ENCODE measurements at regions of chr1 and their contacts with region 1.

Region 1: GRCh38 chr1:180229152-180229973 is 701 bp upstream of the LHX4 start:
- DNase-seq: peak in 1 of 9 donors; percentile 36
- ATAC-seq: peak; percentile 51
- H3K4me3 ChIP-seq: peak overlapping the region; percentile 27
- H3K4me3 Mint-ChIP-seq: peak overlapping the region; percentile 50 to 81 (median 70)
- H3K27ac ChIP-seq: no peak overlapping the region
- H3K27ac Mint-ChIP-seq: no peak overlapping the region
- H3K4me1 ChIP-seq: peaks cover 15 to 17% of the 10 kb centered on the region in 2 donors
- H3K4me1 Mint-ChIP-seq: peaks cover 14 to 35% (median 21%) of the 10 kb centered on the region in 7 donors
- H3K27me3 ChIP-seq: peaks cover 15 to 36% of the 10 kb centered on the region in 2 donors
- H3K27me3 Mint-ChIP-seq: peaks cover 62 to 85% (median 70%) of the 10 kb centered on the region in 5 donors

Region 2: GRCh38 chr1:179883745-179884138 is 345.6 kb before region 1 on chr1:
- CTCF ChIA-PET with region 1: no interaction called
- POLR2A ChIA-PET with region 1: no interaction called
- intact Hi-C with region 1: no loop called
- DNase-seq: peak in 8 of 9 donors; percentile 40 to 90 (median 58)
- ATAC-seq: peak; percentile 31
- H3K4me3 ChIP-seq: peak overlapping the region; percentile 96
- H3K4me3 Mint-ChIP-seq: peak overlapping the region; percentile 93 to 99 (median 97)
- H3K27ac ChIP-seq: peak overlapping the region; percentile 98
- H3K27ac Mint-ChIP-seq: peak overlapping the region; percentile 99 to 100 (median 100)
- H3K4me1 ChIP-seq: peaks cover 27 to 33% of the 10 kb centered on the region in 2 donors
- H3K4me1 Mint-ChIP-seq: peaks cover 36 to 76% (median 61%) of the 10 kb centered on the region in 7 donors
- H3K27me3 ChIP-seq: no peaks in the 10 kb centered on the region
- H3K27me3 Mint-ChIP-seq: no peaks in the 10 kb centered on the region

Region 3: DNA sequence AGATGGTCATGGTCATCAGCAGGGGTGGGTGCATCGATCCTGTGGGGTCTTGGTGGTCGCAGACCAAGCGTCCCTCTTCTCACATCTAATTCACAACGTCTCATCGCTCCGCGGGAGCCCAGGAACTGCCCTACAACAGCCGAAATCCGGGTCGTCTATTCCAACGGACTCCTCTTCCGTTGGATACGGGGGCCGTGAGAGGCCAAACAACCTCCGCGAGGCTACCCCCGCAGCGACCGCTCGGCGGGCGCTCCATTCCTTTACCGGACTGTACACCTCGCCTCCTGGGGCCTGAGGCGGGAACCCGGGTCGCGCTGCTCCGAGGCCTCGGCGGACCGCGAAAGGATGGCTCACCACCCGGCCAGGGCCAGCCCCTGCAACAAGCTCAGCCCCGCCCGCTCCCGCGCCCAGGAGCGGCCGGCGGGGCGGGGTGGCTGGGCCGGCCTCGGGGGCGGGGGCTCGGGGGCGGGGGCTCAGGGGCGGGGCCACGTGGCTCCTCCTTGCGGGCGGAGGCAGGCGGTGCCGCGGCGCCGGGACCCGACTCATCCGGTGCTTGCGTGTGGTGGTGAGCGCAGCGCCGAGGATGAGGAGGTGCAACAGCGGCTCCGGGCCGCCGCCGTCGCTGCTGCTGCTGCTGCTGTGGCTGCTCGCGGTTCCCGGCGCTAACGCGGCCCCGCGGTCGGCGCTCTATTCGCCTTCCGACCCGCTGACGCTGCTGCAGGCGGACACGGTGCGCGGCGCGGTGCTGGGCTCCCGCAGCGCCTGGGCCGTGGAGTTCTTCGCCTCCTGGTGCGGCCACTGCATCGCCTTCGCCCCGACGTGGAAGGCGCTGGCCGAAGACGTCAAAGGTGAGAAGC is 74.8 kb before region 1 on chr1 and contains the start of gene QSOX1:
- CTCF ChIA-PET with region 1: no interaction called
- POLR2A ChIA-PET with region 1: no interaction called
- intact Hi-C with region 1: loop called in 1 of 2 experiments (anchors 5 kb)
- DNase-seq: peak; percentile 81 to 89 (median 86)
- ATAC-seq: peak; percentile 97
- H3K4me3 ChIP-seq: peak within 1 kb of the TSS; percentile 94
- H3K4me3 Mint-ChIP-seq: peak within 1 kb of the TSS; percentile 80 to 99 (median 91)
- H3K27ac ChIP-seq: peak within 1 kb of the TSS; percentile 78
- H3K27ac Mint-ChIP-seq: peak within 1 kb of the TSS; percentile 81 to 95 (median 86)
- H3K4me1 ChIP-seq: peaks cover 7 to 20% of the 10 kb centered on the region in 2 donors
- H3K4me1 Mint-ChIP-seq: peaks cover 24 to 45% (median 37%) of the 10 kb centered on the region in 7 donors
- H3K27me3 ChIP-seq: no peaks in the 10 kb centered on the region
- H3K27me3 Mint-ChIP-seq: no peaks in the 10 kb centered on the region
- total RNA-seq, gene QSOX1: 22.1 to 55.6 (median 25.6) TPM

Region 4: DNA sequence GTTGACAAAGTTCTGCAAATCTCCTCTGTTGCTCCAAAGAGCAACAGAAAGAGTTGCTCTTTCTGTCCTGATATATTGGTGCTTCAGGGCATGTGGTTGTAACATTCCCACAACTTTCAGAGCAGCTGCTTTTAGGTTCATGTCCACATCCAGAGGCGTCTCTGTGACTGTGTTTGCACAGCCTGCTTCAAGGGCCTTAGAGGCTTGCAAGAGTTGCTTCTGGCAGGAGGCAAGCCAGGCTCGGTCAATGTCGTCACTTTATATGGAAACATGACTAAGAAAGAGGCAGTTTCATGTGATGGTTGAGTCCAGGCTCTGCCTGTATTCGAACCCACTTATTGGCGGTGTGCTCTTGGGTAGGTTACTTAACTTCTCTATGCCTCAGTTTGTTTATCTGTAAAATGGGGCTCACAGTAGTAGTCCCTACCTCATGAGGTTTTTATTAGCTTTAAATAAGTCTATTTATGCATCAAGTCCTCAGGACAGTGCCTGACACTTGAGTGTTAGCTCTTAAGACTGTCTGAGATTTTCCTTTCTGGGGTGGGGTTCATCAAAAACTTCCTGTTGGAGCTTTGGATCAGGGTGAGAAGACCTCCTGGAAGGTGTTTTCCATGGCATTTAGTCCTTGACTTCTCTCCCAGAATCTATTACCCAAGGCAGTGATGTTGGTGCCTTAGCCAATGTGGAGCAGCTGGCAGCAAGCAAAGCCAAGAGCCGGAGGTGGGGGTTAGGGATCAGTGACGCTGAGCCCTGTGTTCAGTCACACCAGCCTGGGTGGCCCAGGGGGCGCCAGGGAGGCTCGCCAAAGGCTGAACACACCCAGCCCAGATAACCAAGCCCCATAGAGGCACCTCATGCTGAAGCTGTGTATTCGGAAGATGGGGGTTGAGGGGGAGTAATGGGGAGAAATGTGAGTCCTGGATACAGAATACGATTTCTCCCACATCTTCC is 19.6 kb after region 1 on chr1:
- CTCF ChIA-PET with region 1: no interaction called
- POLR2A ChIA-PET with region 1: no interaction called
- intact Hi-C with region 1: no loop called
- DNase-seq: no peak
- ATAC-seq: no peak
- H3K4me3 ChIP-seq: no peak overlapping the region
- H3K4me3 Mint-ChIP-seq: no peak overlapping the region
- H3K27ac ChIP-seq: no peak overlapping the region
- H3K27ac Mint-ChIP-seq: no peak overlapping the region
- H3K4me1 ChIP-seq: no peaks in the 10 kb centered on the region
- H3K4me1 Mint-ChIP-seq: peaks cover 0 to 4% (median 0%) of the 10 kb centered on the region in 7 donors
- H3K27me3 ChIP-seq: peaks cover 0 to 6% of the 10 kb centered on the region in 2 donors
- H3K27me3 Mint-ChIP-seq: peaks cover 6 to 64% (median 45%) of the 10 kb centered on the region in 5 donors

Region 5: DNA sequence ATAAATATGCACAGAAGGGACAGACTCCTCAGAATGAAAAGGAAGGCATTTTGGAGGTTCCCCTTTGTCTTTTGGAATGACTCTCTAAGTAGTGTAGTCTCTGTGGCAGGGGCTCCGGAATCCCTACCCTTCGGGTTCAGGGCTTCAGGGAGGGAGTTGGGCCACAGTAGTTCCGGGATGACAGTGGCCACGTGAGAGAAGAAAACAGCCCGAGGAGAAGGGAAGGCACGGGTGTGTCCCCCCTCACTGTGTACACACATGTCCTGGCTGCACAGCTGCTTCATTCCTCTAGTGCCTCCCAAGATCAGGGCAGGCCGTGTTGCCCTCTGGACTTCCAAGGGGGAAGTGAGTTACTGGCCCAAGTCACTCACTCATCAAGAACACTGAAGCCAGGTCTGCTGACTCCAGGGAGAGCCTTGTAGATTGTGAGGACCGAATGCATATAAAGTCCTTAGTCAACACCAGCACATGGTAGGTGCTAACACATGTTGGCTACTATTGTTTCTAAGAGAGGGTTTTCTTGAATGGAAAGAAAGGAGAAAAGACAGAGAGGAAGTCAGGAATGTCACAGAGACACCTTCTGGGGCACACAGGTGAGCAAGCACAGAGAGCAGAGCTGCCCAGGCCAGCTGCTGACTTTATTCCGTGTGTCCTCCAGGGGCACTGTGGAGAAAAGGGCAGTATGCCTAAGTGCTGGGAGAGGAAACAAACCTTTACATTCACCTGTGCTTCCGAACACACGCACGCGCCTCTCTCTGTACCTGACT is 40.6 kb after region 1 on chr1:
- CTCF ChIA-PET with region 1: no interaction called
- POLR2A ChIA-PET with region 1: no interaction called
- intact Hi-C with region 1: no loop called
- DNase-seq: no peak
- ATAC-seq: peak; percentile 13
- H3K4me3 ChIP-seq: no peak overlapping the region
- H3K4me3 Mint-ChIP-seq: no peak overlapping the region
- H3K27ac ChIP-seq: no peak overlapping the region
- H3K27ac Mint-ChIP-seq: peak overlapping the region in 2 of 9 donors; percentile 28 to 69
- H3K4me1 ChIP-seq: no peaks in the 10 kb centered on the region
- H3K4me1 Mint-ChIP-seq: peaks cover 0 to 4% (median 0%) of the 10 kb centered on the region in 7 donors
- H3K27me3 ChIP-seq: no peaks in the 10 kb centered on the region
- H3K27me3 Mint-ChIP-seq: no peaks in the 10 kb centered on the region

Region 6: DNA sequence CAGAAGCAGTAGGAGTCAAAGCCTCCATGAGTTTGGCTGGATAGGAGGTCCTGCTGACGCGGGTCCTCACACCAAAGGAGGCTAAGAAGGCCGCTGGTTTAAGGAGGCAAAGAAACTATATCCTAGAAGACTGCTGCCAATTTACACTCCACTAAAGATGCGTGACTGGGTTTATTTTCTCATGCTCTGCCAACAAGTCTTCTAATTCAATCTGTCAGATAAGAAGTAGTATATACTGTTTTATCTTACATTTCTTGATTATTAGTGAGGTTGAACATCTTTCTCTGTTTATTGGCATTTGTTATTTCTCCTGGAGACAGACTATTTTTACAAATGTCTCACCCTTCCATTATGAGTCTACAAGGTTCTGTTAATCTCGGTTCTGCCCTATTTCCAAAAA is 238.9 kb after region 1 on chr1:
- CTCF ChIA-PET with region 1: no interaction called
- POLR2A ChIA-PET with region 1: no interaction called
- intact Hi-C with region 1: no loop called
- DNase-seq: no peak
- ATAC-seq: no peak
- H3K4me3 ChIP-seq: no peak overlapping the region
- H3K4me3 Mint-ChIP-seq: no peak overlapping the region
- H3K27ac ChIP-seq: no peak overlapping the region
- H3K27ac Mint-ChIP-seq: peak overlapping the region in 1 of 9 donors; percentile 60
- H3K4me1 ChIP-seq: no peaks in the 10 kb centered on the region
- H3K4me1 Mint-ChIP-seq: peaks cover 2 to 55% (median 33%) of the 10 kb centered on the region in 7 donors
- H3K27me3 ChIP-seq: no peaks in the 10 kb centered on the region
- H3K27me3 Mint-ChIP-seq: no peaks in the 10 kb centered on the region

Measured in naive thymus-derived CD4-positive, alpha-beta T cell (primary cell).